ENCODE measurements at regions of chr1 and their contacts with region 1.

Region 1: GRCh38 chr1:212455803-212456528 is 23.2 kb downstream of the NENF start:
- DNase-seq: peak; percentile 33 to 86 (median 72)
- ATAC-seq: peak; percentile 65 to 75 (median 74)
- H3K4me3 ChIP-seq: no peak overlapping the region
- H3K4me3 Mint-ChIP-seq: no peak overlapping the region
- H3K27ac ChIP-seq: no peak overlapping the region
- H3K27ac Mint-ChIP-seq: no peak overlapping the region
- H3K4me1 ChIP-seq: peaks cover 0 to 5% of the 10 kb centered on the region in 2 experiments
- H3K4me1 Mint-ChIP-seq: peaks cover 0 to 4% (median 0%) of the 10 kb centered on the region in 3 donors
- H3K27me3 ChIP-seq: peaks cover 0 to 3% of the 10 kb centered on the region in 2 experiments
- H3K27me3 Mint-ChIP-seq: no peaks in the 10 kb centered on the region

Region 2: DNA sequence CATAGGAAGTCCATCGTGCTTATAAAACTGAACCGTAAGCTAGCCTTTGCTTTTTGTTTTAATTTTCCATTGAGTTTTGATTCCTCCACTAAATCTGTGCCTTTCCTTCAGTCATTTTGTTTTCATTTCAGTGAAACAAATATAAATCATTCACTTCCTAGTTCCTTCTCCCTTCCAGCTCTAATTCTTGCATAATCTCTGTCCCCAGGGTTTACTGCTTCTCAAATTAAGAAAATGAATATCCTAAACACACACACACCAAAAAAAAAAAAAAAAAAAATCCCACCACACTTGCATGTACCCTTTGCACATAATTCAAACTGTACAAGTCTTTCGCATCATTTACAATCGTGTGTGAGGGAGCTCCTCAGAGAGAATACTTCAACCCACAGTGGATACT is 1328.8 kb before region 1 on chr1:
- CTCF ChIA-PET with region 1: no interaction called
- POLR2A ChIA-PET with region 1: no interaction called
- DNase-seq: no peak
- ATAC-seq: no peak
- H3K4me3 ChIP-seq: no peak overlapping the region
- H3K4me3 Mint-ChIP-seq: no peak overlapping the region
- H3K27ac ChIP-seq: no peak overlapping the region
- H3K27ac Mint-ChIP-seq: no peak overlapping the region
- H3K4me1 ChIP-seq: no peaks in the 10 kb centered on the region
- H3K4me1 Mint-ChIP-seq: no peaks in the 10 kb centered on the region
- H3K27me3 ChIP-seq: peaks cover 10 to 13% of the 10 kb centered on the region in 2 experiments
- H3K27me3 Mint-ChIP-seq: peaks cover 38 to 48% of the 10 kb centered on the region in 2 donors

Region 3: GRCh38 chr1:211680752-211681327 is 775.1 kb before region 1 on chr1:
- CTCF ChIA-PET with region 1: interaction called, 16 to 53 read pairs
- POLR2A ChIA-PET with region 1: interaction called in 1 of 2 experiments, 3 read pairs
- DNase-seq: peak; percentile 30 to 91 (median 70)
- ATAC-seq: peak; percentile 91 to 96 (median 92)
- H3K4me3 ChIP-seq: no peak overlapping the region
- H3K4me3 Mint-ChIP-seq: peak overlapping the region in 2 of 3 donors; percentile 14 to 40
- H3K27ac ChIP-seq: peak overlapping the region; percentile 89
- H3K27ac Mint-ChIP-seq: peak overlapping the region; percentile 84 to 94
- H3K4me1 ChIP-seq: peaks cover 9 to 22% of the 10 kb centered on the region in 2 experiments
- H3K4me1 Mint-ChIP-seq: peaks cover 14 to 24% (median 20%) of the 10 kb centered on the region in 3 donors
- H3K27me3 ChIP-seq: no peaks in the 10 kb centered on the region
- H3K27me3 Mint-ChIP-seq: no peaks in the 10 kb centered on the region

Region 4: DNA sequence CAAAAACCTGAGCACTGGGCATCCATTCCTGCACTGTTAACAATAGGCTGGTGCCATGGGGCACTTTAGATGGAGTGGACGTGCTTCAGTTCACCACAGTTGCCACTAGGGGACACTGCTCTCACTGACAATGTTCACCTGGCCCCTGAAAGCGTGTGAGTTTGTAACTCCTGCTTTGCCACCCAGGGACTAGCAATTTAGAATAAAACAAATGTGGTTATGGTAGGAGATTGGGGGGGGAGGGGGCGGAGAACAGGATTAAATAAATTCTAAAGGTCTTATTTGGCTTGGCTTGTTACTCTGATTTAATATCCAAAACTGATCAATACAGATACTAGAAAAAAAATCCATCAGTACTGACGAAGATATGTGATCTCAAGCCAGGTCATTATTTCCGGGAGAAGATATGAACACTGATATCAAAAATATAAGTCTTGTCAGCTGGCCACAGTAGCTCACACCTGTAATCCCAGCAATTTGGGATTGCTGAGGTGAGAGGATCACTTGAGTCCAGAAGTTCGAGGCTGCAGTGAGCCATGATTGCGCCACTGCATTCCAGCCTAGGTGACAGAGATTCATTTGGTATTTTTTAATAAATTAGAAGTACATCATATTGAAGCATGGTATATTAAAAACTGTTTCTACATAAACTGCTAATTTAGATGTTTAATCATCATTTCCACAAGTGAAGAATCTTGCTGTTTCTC is 443.8 kb before region 1 on chr1:
- CTCF ChIA-PET with region 1: interaction called, 5 to 15 read pairs
- POLR2A ChIA-PET with region 1: no interaction called
- DNase-seq: peak; percentile 14 to 79 (median 50)
- ATAC-seq: peak; percentile 90 to 99 (median 92)
- H3K4me3 ChIP-seq: no peak overlapping the region
- H3K4me3 Mint-ChIP-seq: no peak overlapping the region
- H3K27ac ChIP-seq: no peak overlapping the region
- H3K27ac Mint-ChIP-seq: no peak overlapping the region
- H3K4me1 ChIP-seq: no peaks in the 10 kb centered on the region
- H3K4me1 Mint-ChIP-seq: peaks cover 0 to 2% (median 0%) of the 10 kb centered on the region in 3 donors
- H3K27me3 ChIP-seq: no peaks in the 10 kb centered on the region
- H3K27me3 Mint-ChIP-seq: no peaks in the 10 kb centered on the region

Region 5: DNA sequence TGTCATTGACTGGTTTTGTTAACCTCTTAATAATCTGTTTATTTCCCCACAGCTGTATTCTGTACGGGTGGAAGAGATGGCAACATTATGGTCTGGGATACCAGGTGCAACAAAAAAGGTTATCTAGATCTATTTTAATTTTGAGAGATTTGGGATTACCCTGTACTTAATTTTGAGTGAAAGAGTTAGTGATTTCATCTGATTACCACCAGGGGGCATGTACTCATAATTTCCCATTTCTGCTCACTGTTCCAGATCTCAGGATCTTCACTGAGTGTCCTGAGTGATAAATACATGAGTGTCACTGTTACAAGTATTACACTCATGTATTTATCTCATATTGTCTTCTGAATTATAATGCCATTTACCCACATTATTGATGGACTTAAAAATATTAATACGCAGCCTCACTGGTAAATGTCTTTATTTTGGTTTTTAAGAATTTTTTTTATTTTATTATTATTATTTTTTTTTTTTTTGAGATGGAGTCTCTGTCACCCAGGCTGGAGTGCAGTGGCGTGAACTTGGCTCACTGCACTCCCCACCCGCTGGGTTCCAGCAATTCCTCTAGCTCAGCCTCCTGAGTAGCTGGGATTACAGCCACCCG is 393.0 kb before region 1 on chr1:
- CTCF ChIA-PET with region 1: interaction called, 36 to 48 read pairs
- POLR2A ChIA-PET with region 1: no interaction called
- DNase-seq: peak in 1 of 35 experiments; percentile 52
- ATAC-seq: peak in 3 of 4 experiments; percentile 43 to 54 (median 47)
- H3K4me3 ChIP-seq: no peak overlapping the region
- H3K4me3 Mint-ChIP-seq: no peak overlapping the region
- H3K27ac ChIP-seq: no peak overlapping the region
- H3K27ac Mint-ChIP-seq: no peak overlapping the region
- H3K4me1 ChIP-seq: no peaks in the 10 kb centered on the region
- H3K4me1 Mint-ChIP-seq: no peaks in the 10 kb centered on the region
- H3K27me3 ChIP-seq: no peaks in the 10 kb centered on the region
- H3K27me3 Mint-ChIP-seq: no peaks in the 10 kb centered on the region

Region 6: GRCh38 chr1:212368073-212368484 is 87.9 kb before region 1 on chr1:
- CTCF ChIA-PET with region 1: interaction called in 1 of 2 experiments, 15 read pairs
- POLR2A ChIA-PET with region 1: no interaction called
- DNase-seq: peak in 33 of 35 experiments; percentile 19 to 78 (median 38)
- ATAC-seq: peak; percentile 65 to 80 (median 77)
- H3K4me3 ChIP-seq: no peak overlapping the region
- H3K4me3 Mint-ChIP-seq: no peak overlapping the region
- H3K27ac ChIP-seq: no peak overlapping the region
- H3K27ac Mint-ChIP-seq: no peak overlapping the region
- H3K4me1 ChIP-seq: peaks cover 0 to 3% of the 10 kb centered on the region in 2 experiments
- H3K4me1 Mint-ChIP-seq: peaks cover 0 to 5% (median 2%) of the 10 kb centered on the region in 3 donors
- H3K27me3 ChIP-seq: no peaks in the 10 kb centered on the region
- H3K27me3 Mint-ChIP-seq: no peaks in the 10 kb centered on the region

Region 7: GRCh38 chr1:212545941-212546635 is 90.1 kb after region 1 on chr1:
- CTCF ChIA-PET with region 1: no interaction called
- POLR2A ChIA-PET with region 1: no interaction called
- DNase-seq: no peak
- ATAC-seq: no peak
- H3K4me3 ChIP-seq: no peak overlapping the region
- H3K4me3 Mint-ChIP-seq: no peak overlapping the region
- H3K27ac ChIP-seq: no peak overlapping the region
- H3K27ac Mint-ChIP-seq: no peak overlapping the region
- H3K4me1 ChIP-seq: no peaks in the 10 kb centered on the region
- H3K4me1 Mint-ChIP-seq: no peaks in the 10 kb centered on the region
- H3K27me3 ChIP-seq: peaks cover 0 to 6% of the 10 kb centered on the region in 2 experiments
- H3K27me3 Mint-ChIP-seq: peaks cover 15 to 23% of the 10 kb centered on the region in 2 donors

Measured in T-cell (primary cell).